T-cell (primary cell): ENCODE measurements at regions of chr3 and their contacts with region 1.

Region 1: DNA sequence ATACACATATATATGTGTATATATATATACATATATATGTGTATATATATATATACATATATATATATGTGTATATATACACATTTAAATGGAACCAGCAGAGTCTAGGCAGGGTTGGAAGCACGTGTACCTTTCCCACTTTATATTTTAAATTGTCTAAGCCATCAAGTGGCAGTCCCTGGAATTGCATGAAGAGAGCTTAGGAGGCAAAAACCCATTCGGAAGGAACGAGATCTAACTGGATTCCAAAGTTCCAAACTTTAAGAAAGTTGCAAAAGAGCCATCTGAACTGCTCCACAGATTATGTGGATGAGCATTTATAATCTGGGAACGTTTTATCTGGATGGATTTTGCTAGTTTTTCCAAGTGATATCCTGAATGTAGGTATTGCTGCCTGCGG is 186.5 kb downstream of the FOXP1 start:
- DNase-seq: peak in 2 of 35 experiments; percentile 17 to 50
- ATAC-seq: no peak
- H3K4me3 ChIP-seq: no peak overlapping the region
- H3K4me3 Mint-ChIP-seq: peak overlapping the region in 1 of 3 donors; percentile 65
- H3K27ac ChIP-seq: peak overlapping the region; percentile 58
- H3K27ac Mint-ChIP-seq: peak overlapping the region; percentile 88 to 93
- H3K4me1 ChIP-seq: peaks cover 34 to 43% of the 10 kb centered on the region in 2 experiments
- H3K4me1 Mint-ChIP-seq: peaks cover 82 to 87% (median 84%) of the 10 kb centered on the region in 3 donors
- H3K27me3 ChIP-seq: no peaks in the 10 kb centered on the region
- H3K27me3 Mint-ChIP-seq: no peaks in the 10 kb centered on the region

Region 2: GRCh38 chr3:71415681-71416131 is 18.7 kb after region 1 on chr3:
- CTCF ChIA-PET with region 1: interaction called, 7 to 10 read pairs
- POLR2A ChIA-PET with region 1: no interaction called
- DNase-seq: peak in 1 of 35 experiments; percentile 65
- ATAC-seq: peak in 3 of 4 experiments; percentile 20 to 73 (median 25)
- H3K4me3 ChIP-seq: no peak overlapping the region
- H3K4me3 Mint-ChIP-seq: peak overlapping the region; percentile 23 to 64 (median 59)
- H3K27ac ChIP-seq: peak overlapping the region; percentile 67
- H3K27ac Mint-ChIP-seq: peak overlapping the region; percentile 70 to 95
- H3K4me1 ChIP-seq: peaks cover 27 to 40% of the 10 kb centered on the region in 2 experiments
- H3K4me1 Mint-ChIP-seq: peaks cover 88 to 93% (median 92%) of the 10 kb centered on the region in 3 donors
- H3K27me3 ChIP-seq: no peaks in the 10 kb centered on the region
- H3K27me3 Mint-ChIP-seq: no peaks in the 10 kb centered on the region

Region 3: GRCh38 chr3:71528816-71529215 is 131.8 kb after region 1 on chr3:
- CTCF ChIA-PET with region 1: no interaction called
- POLR2A ChIA-PET with region 1: no interaction called
- DNase-seq: no peak
- ATAC-seq: peak in 2 of 4 experiments; percentile 41 to 43
- H3K4me3 ChIP-seq: no peak overlapping the region
- H3K4me3 Mint-ChIP-seq: no peak overlapping the region
- H3K27ac ChIP-seq: no peak overlapping the region
- H3K27ac Mint-ChIP-seq: no peak overlapping the region
- H3K4me1 ChIP-seq: no peaks in the 10 kb centered on the region
- H3K4me1 Mint-ChIP-seq: peaks cover 13 to 27% (median 18%) of the 10 kb centered on the region in 3 donors
- H3K27me3 ChIP-seq: no peaks in the 10 kb centered on the region
- H3K27me3 Mint-ChIP-seq: no peaks in the 10 kb centered on the region